MCF 10A (cell line): ENCODE measurements at regions of chr14 and their contacts with region 1.

Region 1: DNA sequence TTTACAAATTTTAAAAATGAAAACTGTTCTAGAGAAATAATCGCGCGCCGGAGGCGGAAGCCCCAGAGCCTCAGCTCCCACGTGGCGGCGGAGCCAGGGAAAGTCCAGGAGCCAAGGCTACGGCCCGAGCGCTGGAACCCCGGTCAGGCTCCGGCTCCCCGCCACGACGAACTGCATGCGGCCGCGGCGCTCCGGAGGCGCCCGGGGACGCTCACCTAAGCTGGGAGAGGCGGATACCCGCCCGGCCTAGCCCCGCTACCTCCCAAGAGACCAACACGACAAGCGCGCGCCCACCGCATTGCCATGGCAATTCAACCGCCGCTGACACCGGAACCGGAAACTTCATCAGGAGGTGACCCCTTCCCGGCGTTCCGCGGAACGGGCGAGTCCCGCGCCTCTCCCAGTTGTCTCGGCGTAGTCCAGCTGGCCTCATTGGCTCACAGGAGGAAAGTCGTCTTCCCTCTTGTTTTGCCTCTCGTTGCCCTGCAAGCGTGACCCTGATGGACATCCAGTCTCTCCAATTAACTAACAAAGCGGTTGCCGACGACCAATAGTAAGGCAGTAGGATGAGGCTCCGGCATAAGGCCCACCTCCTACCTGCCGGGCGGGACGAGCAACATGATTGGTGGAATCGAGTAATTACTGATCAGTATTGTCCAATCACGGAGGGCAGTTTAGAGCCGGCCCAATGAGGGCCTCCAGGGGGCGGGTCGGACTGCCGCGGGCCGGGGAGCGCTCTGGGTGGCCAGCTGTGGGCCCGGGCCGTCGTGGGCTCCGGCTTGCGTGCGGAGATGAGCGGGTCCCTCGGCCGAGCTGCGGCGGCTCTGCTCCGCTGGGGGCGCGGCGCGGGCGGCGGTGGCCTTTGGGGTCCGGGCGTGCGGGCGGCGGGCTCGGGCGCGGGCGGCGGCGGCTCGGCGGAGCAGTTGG is at the start of gene GLRX5:
- DNase-seq: peak; percentile 100
- H3K4me3 Mint-ChIP-seq: peak within 1 kb of the TSS; percentile 87
- H3K27ac Mint-ChIP-seq: peak within 1 kb of the TSS; percentile 93
- H3K4me1 Mint-ChIP-seq: peaks cover 41% of the 10 kb centered on the region
- H3K27me3 Mint-ChIP-seq: no peaks in the 10 kb centered on the region
- CTCF ChIP-seq: no peak
- total RNA-seq, gene GLRX5: 32.2 and 39.8 TPM in 2 replicates

Region 2: DNA sequence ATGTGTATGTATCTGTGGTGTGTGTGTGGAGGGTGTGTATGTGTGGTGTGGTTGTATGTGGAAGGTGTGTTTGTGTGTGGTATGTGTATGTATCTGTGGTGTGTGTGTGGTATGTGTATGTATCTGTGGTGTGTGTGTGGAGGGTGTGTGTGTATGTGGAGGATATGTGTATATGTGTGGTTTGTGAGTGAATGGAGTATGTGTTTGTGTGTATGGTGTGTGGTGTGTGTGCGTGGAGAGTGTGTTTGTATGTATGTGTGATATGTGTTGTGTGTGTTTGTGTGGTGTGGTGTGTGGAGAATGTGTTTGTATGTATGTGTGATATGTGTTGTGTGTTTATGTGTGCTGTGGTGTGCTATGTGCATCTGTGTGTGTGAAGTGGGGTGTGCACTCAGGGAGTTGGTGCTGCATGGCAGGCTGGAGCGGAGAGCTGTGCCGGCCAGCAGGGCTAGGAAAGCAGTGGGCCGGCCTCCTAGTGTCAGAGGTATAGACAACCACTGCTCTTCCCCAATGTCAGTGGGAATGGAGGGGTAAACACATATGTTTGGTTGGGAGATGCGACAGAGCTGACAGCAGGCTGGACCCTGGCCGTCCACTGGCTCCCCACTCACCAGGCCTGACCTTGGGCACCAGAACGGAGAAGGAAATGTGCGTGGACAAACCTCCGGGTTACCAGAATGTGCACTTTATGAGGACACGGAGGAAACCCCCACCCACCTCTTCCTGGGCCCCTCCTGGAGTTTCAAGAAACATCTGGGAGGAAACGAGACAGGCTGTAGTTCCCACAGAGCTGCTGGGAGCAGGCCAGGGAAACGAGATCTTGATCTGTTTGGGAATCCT is 275.6 kb before region 1 on chr14:
- CTCF ChIA-PET with region 1: no interaction called
- POLR2A ChIA-PET with region 1: no interaction called
- intact Hi-C with region 1: no loop called
- DNase-seq: no peak
- H3K4me3 Mint-ChIP-seq: no peak overlapping the region
- H3K27ac Mint-ChIP-seq: no peak overlapping the region
- H3K4me1 Mint-ChIP-seq: peaks cover 12% of the 10 kb centered on the region
- H3K27me3 Mint-ChIP-seq: no peaks in the 10 kb centered on the region
- CTCF ChIP-seq: no peak

Region 3: DNA sequence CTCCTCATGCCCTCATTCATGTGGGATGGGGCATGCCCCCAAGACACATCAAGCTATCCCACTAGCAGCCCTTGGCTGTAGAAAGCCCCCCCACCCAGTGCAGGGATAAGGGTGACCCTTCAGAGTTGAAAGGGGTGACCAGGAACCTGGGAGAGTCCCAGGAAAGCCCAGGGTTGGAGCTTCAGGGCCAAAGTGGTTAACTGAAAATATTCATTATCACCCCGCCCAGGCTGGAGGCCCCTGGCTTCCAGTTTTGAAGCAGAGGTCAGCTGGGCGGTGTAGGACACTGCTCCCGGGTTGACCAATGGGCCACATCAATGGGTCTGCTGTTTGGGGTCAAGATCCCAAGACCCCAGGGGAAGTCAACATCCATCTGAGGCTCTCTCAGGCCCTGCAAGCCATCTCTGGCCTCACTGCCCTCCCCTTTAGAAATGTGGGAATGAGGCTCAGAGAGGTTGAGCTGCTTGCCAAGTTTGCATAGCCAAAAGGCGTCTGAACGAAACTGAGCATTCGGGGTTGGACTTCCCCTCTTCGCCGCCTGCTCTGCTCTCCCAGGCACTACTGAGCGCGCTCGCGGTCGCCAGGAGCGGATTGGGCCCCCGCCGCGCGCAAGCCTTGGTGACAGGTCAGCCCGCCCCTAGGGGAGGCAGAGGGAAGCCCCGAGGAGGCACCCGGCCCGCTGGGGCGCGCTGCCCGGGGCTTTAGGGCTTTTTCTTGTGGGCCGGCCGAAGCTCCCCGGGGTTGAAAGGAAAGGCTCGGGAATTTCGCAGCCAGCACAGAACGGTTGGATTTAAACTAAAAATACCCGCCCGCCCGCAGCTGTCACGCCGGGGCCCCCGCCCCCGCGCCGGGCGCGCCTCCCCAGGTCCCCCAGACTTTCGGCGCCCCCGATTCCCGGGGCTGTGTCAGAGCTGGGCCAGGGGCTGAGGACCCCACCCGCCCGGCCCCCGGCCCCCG is 18.7 kb before region 1 on chr14:
- CTCF ChIA-PET with region 1: interaction called, 5 read pairs
- POLR2A ChIA-PET with region 1: interaction called, 10 read pairs
- intact Hi-C with region 1: no loop called
- DNase-seq: peak; percentile 49
- H3K4me3 Mint-ChIP-seq: peak overlapping the region; percentile 71
- H3K27ac Mint-ChIP-seq: no peak overlapping the region
- H3K4me1 Mint-ChIP-seq: peaks cover 34% of the 10 kb centered on the region
- H3K27me3 Mint-ChIP-seq: no peaks in the 10 kb centered on the region
- CTCF ChIP-seq: peak; percentile 36

Region 4: DNA sequence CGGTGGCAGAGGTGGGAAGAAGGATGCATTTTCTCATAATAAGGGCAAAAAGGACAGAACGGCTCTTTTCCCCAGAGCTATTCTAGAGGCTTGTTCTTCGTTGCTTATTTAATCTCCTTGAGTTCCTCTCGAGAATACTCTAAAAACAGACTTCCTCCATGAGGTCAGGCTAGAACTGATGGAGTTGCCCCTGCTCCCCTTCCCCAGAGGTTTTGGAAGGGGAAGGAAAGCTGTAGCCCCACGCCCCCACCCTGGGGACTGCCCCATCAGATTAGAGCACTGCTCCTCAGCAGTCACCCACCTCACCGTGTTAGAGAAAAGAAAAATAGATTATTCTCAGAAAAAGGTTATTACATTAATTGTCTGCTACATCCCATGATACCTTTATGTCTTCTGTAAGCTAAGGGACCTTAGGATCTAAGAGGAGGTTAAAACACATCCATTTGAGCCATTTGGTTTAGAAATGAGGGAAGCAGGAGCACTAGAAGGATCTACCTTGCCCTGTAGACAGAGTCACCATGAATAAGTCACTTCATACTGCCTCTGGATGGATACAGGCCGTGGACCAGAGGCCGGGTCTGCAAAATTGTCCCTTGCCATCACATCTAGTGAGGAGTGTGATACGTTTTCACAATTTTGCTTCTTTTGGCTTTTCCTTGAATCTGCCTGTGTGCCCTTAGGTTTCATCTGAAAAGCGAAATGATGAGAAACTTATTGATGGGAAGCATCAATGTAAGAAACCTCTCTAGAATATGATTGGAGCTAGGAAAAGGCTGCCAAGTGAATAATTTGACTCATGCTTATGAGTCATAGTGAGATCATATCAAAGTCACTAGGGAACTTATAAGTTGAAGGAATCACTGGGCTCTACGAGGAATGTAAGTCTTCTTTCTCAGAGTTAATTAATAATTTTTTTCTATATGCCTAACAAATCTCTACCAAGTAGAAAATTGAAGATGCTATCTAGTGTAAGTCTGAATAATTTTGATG is 10.9 kb after region 1 on chr14:
- CTCF ChIA-PET with region 1: interaction called, 18 read pairs
- POLR2A ChIA-PET with region 1: interaction called, 25 read pairs
- intact Hi-C with region 1: no loop called
- DNase-seq: peak; percentile 71
- H3K4me3 Mint-ChIP-seq: no peak overlapping the region
- H3K27ac Mint-ChIP-seq: no peak overlapping the region
- H3K4me1 Mint-ChIP-seq: peaks cover 11% of the 10 kb centered on the region
- H3K27me3 Mint-ChIP-seq: no peaks in the 10 kb centered on the region
- CTCF ChIP-seq: no peak